Activated CD8-positive, alpha-beta memory T cell treated with anti-CD3 and anti-CD28 coated beads, Interleukin-2, amount 10 ng/mL, durations not matched to agents 7 days and 5 days (primary cell): ENCODE measurements at regions of chr2 and their contacts with region 1.

Region 1: GRCh38 chr2:216680951-216681629 is 14.3 kb downstream of the IGFBP5 start:
- DNase-seq: no peak
- ATAC-seq: no peak
- H3K4me3 Mint-ChIP-seq: no peak overlapping the region
- H3K27ac Mint-ChIP-seq: no peak overlapping the region
- H3K4me1 Mint-ChIP-seq: peaks cover 8% of the 10 kb centered on the region
- H3K27me3 Mint-ChIP-seq: peaks cover 18% of the 10 kb centered on the region

Region 2: DNA sequence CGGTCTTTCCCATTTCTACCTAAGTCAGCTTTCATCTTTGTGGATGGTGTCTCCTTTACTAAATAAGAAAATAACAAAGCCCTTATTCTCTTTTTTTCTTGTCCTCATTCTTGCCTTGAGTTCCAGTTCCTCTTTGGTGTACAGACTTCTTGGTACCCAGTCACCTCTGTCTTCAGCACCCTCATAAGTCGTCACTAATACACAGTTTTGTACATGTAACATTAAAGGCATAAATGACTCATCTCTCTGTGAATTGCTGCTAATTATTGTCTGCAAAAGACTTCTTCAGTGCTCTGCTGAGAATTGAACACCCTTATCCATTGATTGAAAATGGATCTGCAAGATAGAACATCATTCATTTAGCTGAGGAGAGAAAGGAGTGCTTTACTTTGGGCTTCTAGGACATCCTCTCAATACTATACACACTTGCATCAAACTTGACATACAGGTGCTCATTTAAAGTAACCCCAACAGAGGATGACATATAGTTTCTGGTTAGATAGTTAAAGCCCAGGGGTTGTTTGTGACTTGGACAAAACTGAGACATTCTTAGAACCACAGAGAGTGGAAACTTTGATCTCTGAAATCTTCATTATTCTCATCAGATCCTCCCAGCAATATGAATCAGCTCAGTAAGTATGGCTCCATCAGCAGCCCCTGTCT is 474.9 kb before region 1 on chr2:
- CTCF ChIA-PET with region 1: no interaction called
- DNase-seq: no peak
- ATAC-seq: peak; percentile 38
- H3K4me3 Mint-ChIP-seq: no peak overlapping the region
- H3K27ac Mint-ChIP-seq: peak overlapping the region; percentile 52
- H3K4me1 Mint-ChIP-seq: peaks cover 17% of the 10 kb centered on the region
- H3K27me3 Mint-ChIP-seq: no peaks in the 10 kb centered on the region

Region 3: GRCh38 chr2:216692636-216693413 is 11.7 kb after region 1 on chr2:
- CTCF ChIA-PET with region 1: interaction called, 12 read pairs
- DNase-seq: peak; percentile 83
- ATAC-seq: peak; percentile 78
- H3K4me3 Mint-ChIP-seq: peak overlapping the region; percentile 74
- H3K27ac Mint-ChIP-seq: peak overlapping the region; percentile 61
- H3K4me1 Mint-ChIP-seq: peaks cover 29% of the 10 kb centered on the region
- H3K27me3 Mint-ChIP-seq: peaks cover 84% of the 10 kb centered on the region

Region 4: GRCh38 chr2:216735086-216735485 is 54.0 kb after region 1 on chr2:
- CTCF ChIA-PET with region 1: no interaction called
- DNase-seq: no peak
- ATAC-seq: no peak
- H3K4me3 Mint-ChIP-seq: no peak overlapping the region
- H3K27ac Mint-ChIP-seq: no peak overlapping the region
- H3K4me1 Mint-ChIP-seq: no peaks in the 10 kb centered on the region
- H3K27me3 Mint-ChIP-seq: peaks cover 20% of the 10 kb centered on the region

Region 5: GRCh38 chr2:217301142-217301925 is 620.2 kb after region 1 on chr2:
- CTCF ChIA-PET with region 1: no interaction called
- DNase-seq: no peak
- ATAC-seq: no peak
- H3K4me3 Mint-ChIP-seq: no peak overlapping the region
- H3K27ac Mint-ChIP-seq: no peak overlapping the region
- H3K4me1 Mint-ChIP-seq: no peaks in the 10 kb centered on the region
- H3K27me3 Mint-ChIP-seq: peaks cover 2% of the 10 kb centered on the region